Left ventricle myocardium superior (tissue), 1 donor: ENCODE measurements at regions of chr5 and their contacts with region 1.

Region 1: DNA sequence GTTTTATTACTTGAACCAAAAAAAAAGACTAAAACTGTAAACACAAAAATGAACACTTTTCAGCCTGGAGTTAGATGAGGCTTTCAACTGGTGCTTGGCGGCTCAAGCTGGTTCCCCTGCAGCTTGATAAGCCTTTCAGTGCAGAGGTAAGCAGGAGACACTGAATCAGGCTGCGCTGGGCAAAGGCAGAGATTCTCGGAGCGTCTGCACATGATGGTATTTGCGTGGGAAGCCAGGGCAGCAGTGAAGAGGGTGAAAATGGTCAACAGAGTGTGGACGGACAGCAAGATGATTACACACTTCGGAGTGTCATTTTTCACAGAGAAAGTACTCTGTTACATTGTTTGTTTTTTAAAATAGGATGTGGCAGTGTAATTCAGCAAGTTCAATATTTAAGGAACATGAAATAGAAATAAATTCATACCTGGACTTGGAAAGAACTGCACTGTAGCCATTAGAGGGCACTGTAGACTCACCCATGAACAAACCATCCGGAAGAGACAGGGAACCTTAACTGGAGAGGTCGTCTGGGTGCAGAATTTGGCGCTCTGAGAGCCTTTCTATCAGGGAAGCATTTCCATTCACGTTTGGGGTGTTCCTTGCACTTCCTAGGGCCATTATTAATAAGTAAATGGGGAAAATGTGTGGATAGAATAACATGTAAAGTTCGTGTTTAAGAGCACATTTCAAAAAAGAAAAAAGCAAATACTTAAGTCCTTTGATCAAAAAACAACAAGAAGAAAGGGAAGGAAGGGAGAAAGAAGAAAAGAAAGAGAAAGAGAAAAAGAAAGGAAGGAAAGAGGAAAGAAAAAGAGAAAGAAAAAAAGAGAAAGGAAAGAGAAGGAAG is 69.8 kb downstream of the ICE1 start:
- DNase-seq: no peak
- ATAC-seq: peak; percentile 26

Region 2: GRCh38 chr5:5432020-5432707 is 60.1 kb before region 1 on chr5:
- intact Hi-C with region 1: no loop called
- DNase-seq: no peak
- ATAC-seq: no peak

Region 3: DNA sequence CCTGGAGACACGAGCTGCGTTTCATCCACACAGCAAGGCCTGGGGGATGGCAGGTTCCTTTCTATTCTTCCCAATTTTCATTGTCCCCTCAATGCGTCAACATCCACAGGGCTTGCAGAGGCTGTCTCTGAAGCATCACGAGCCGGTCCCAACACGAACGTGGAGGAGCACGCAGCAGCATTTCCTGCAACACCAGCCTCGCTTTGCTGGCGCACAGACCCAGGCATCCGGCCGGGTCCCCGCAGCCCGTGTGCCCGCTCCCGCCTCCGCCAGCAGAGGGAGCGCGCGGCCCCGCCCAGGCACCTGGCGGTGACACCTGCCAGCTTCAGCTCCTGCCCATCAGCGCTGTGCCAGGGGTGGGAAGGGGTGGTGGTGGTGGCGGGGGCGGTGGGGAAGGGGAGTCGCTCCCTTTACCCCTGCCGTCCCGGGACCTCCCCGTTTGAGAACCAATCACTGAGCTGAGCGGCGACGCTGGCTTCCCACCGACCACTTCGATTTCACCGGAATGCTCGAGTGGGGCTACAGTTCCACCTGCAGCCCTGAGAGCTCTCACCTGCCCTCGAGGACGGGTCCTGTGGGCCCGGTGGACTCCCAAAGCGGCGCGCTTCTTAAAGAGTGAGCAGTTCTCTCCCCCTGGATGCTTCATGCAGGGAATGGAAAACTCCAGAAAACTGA is 394.6 kb after region 1 on chr5:
- intact Hi-C with region 1: loop called (anchors 10 kb)
- DNase-seq: peak; percentile 35
- ATAC-seq: peak; percentile 66